ENCODE measurements at regions of chr22 and their contacts with region 1.

Region 1: DNA sequence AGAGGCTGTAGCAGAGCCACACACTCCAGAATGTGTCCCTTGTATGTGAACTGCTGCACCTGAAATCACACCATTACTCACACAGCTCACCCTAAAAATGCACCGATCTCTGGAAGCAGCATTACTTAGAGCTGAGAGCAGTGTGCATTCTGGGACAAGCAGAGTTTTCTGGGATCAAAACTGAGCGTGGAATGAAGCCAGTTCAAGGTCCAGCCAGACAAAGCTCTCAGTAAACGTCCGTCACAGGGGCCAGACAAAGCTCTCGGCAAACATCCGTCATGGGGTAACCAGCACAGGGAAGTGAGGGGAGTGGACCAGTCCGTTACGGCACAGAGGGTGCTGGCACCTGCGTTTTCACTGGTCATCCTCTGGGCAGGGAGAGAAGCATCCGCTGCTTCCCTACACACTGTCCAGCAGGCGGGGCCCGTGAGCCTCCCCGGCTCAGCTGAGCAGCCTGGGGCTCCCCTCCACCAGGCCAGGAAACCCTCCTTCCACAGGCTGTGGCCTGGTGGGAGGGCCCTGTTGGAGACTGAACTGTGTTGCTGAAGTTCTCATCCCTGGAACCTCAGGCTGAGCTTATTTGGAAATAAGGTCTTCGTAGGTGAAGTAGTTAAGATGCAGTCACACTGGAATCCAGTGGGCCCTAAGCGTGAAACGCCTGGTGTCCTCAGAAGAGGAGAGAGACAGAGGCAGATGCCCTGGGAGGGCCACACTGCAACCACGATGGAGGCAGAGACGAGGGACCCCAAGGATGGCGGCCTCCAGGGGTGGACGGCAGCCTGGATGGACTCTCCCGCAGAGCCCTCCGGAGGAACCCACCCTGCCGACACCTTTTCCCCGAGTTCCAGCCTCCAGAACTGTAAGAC is 883.9 kb downstream of the BRD1 start:
- DNase-seq: peak in 8 of 10 donors; percentile 49 to 76 (median 60)
- H3K4me3 ChIP-seq: peak overlapping the region in 4 of 59 donors; percentile 18 to 29 (median 20)
- H3K27ac ChIP-seq: peak overlapping the region in 58 of 59 donors; percentile 10 to 90 (median 78)
- H3K27me3 ChIP-seq: peaks cover 0 to 5% (median 0%) of the 10 kb centered on the region in 45 donors
- CTCF ChIP-seq: peak; percentile 40 to 87 (median 72)

Region 2: DNA sequence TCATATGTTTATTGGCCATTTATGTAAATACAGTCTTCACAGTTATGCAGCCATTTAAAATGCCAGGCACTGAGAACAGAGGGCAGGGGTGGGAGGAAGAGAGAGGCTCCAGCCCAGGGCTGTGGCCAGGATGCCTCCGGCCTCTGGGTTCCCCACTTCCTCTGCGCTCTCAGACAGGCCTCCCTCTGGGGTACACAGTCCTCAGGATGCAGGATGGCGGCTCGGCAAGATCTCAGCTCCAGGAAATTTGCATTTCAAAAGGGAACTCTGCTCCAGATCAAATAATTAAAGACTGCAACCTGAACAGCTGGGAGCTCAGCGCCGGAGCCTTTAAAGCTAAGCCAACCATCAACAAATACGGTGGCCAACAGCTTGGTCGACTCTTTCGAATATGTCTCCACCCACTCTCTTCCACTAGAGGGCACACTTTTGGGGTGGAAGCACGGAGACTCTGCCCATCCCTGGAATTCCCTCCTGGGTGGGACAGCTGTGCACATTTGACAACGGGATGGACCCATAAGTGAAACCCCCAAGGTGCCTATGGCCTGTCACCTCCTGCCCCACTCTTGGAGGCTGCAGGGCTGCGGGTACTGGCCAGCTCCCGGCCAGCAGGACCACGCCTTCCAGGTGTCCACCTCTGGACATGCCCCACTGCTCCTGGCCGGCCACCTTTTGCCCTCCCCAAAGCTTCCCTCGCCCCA is 160.8 kb before region 1 on chr22:
- intact Hi-C with region 1: loop called in 1 of 2 experiments (anchors 10 kb)
- DNase-seq: peak in 3 of 10 donors; percentile 2 to 40 (median 13)
- H3K4me3 ChIP-seq: no peak overlapping the region
- H3K27ac ChIP-seq: no peak overlapping the region
- H3K27me3 ChIP-seq: no peaks in the 10 kb centered on the region
- CTCF ChIP-seq: peak in 52 of 56 donors; percentile 14 to 71 (median 52)

Region 3: DNA sequence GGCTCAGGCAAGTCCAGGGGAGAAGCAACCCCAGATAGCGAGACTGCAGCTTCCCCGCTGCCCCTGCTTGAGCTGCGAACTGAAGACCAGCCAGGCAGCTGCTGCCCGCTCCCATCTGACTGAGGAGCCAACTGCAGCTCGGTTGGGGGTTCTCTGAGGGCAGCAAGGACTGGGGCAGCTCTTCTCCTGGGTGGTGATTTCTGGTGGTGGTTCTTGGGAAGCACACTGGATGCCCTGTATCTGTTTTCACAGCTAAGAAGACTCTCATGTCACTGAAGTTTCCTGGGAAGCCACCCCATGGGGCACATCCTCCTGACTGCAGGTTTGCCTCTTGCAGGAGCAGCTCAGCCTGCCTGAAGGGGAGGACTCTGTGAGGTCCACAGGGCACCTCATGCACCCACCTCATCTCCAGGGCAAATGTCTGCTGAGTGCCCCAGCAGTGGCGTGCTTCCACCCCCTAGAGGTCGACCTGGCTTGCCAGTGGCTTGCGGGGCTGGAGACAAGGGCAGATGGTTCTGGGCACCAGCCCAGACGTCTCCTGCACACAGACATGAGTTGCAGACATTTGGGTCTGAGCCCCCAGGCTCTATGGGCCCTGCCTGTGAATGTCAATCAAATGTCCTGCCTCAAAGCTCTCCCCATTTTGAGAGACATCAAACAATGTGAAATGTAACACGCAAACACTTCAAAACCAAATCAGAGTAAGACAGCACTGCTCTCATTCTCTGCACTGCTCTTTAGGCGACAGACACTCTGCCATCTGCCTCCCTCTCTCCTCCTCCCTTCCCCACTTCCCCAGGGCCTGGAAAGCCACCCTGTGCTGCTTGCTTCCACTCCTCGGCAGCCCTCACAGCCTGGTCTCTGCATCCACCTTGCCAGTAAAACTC is 82.9 kb after region 1 on chr22:
- intact Hi-C with region 1: loop called in 1 of 2 experiments (anchors 10 kb)
- DNase-seq: peak in 8 of 10 donors; percentile 39 to 74 (median 58)
- H3K4me3 ChIP-seq: no peak overlapping the region
- H3K27ac ChIP-seq: no peak overlapping the region
- H3K27me3 ChIP-seq: peaks cover 0 to 30% (median 0%) of the 10 kb centered on the region in 45 donors
- CTCF ChIP-seq: peak in 53 of 56 donors; percentile 24 to 73 (median 53)

Region 4: DNA sequence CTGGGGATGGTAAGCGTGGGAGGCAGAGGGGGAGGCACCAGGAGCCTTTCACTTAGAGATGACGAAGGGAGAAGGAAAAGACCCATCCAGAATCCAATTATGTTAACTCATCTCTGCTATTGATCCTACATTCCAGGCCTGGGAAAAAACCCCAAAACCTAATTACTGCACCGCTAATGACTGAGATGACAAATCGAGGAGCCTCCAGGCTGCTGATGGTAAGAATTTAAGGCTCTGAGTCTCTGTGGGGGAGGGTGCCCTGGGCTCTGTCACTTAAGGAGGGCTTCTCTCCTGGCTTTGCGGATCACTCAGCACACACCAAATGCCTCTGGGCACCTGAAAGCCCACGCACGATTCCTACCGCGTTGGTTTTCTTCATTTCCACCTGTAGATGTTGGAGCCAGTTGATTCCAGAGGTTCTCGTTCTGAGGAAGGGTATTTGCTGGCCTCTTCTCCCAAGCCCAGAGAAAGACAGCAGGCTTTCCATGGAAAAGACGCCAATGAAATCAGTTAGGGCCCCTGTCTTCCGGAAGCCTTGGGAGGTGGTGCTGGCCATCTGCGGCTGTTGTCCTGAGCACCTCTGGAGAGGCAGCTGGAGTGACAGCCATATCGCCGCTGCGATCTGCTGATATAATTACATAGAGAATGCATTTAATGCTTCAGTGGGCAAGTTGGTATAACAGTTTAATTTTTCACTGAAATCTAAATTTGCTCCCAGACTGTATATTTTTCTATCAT is 132.7 kb after region 1 on chr22:
- intact Hi-C with region 1: no loop called
- DNase-seq: no peak
- H3K4me3 ChIP-seq: no peak overlapping the region
- H3K27ac ChIP-seq: no peak overlapping the region
- H3K27me3 ChIP-seq: peaks cover 0 to 13% (median 0%) of the 10 kb centered on the region in 45 donors
- CTCF ChIP-seq: no peak

Region 5: GRCh38 chr22:49140921-49141665 is 197.3 kb after region 1 on chr22:
- intact Hi-C with region 1: no loop called
- DNase-seq: no peak
- H3K4me3 ChIP-seq: no peak overlapping the region
- H3K27ac ChIP-seq: no peak overlapping the region
- H3K27me3 ChIP-seq: peaks cover 0 to 40% (median 0%) of the 10 kb centered on the region in 45 donors
- CTCF ChIP-seq: no peak

Measured in dorsolateral prefrontal cortex (tissue), 120 donors.